PC-9 (cell line): ENCODE measurements at regions of chr18 and their contacts with region 1.

Region 1: DNA sequence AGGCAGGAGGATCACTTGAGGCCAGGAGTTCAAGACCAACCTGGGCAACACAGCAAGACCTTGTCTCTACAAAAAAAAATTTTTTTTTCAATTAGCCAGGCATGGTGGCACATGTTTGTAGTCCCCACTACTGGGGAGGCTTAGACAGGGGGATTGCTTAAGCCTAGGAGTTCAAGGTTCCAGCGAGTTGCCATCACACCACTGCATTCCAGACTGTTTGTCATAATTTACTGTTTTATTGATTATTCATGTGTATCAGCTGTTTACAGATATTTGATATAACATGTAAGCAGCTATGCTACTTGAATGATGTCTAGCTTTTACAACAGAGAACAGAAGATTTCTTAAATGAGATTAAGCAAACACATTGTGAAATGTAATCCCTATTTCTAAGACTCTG is 35.3 kb downstream of the DSG2 start:
- DNase-seq: no peak
- H3K4me3 ChIP-seq: no peak overlapping the region
- H3K27ac ChIP-seq: no peak overlapping the region
- H3K4me1 ChIP-seq: no peaks in the 10 kb centered on the region
- H3K27me3 ChIP-seq: no peaks in the 10 kb centered on the region
- CTCF ChIP-seq: no peak

Region 2: GRCh38 chr18:31436825-31437224 is 96.4 kb before region 1 on chr18:
- CTCF ChIA-PET with region 1: no interaction called
- POLR2A ChIA-PET with region 1: interaction called, 11 read pairs
- intact Hi-C with region 1: no loop called
- DNase-seq: no peak
- H3K4me3 ChIP-seq: no peak overlapping the region
- H3K27ac ChIP-seq: no peak overlapping the region
- H3K4me1 ChIP-seq: no peaks in the 10 kb centered on the region
- H3K27me3 ChIP-seq: no peaks in the 10 kb centered on the region
- CTCF ChIP-seq: no peak